ENCODE measurements at regions of chr5 and their contacts with region 1.

Region 1: DNA sequence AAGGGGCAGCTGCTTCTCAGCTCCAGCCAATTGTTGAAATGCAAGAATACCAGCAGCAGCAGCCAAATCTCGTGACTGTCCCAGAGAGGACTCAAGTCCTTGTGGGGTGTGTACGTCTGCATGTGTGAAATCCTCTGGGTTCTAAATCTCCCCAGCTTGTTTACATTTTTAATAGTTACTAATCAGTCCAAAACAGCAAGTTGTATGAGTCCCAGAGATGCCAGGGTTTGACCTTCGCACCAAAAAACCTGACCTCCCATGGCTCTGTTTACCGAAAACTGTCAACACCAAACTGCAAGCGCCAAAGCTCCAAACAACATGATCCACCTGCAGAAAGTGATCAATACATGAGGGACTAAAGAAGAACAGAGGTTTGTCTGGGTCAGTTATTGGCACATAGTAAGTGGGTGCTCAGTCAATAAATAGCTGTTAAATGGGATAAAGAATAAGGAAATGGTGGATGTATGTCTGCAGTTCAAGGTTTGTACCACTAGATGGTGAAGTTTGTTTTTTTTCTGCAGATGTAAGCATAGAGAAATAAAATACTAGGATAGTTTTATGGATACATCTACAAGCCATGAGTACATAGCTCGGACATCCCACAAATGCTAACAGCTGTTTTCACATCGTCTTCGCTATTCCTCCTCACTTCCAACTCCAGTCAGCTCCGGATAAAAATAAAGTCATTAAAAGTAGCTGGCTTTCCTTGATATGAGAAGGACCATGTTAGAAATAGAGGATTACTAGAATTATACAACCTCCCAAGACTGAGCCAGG is 85.3 kb upstream of the ADRB2 start:
- DNase-seq: peak; percentile 61
- H3K4me3 ChIP-seq: no peak overlapping the region
- CTCF ChIP-seq: peak; percentile 42

Region 2: GRCh38 chr5:148191010-148191409 is 550.1 kb before region 1 on chr5:
- CTCF ChIA-PET with region 1: no interaction called
- POLR2A ChIA-PET with region 1: no interaction called
- DNase-seq: no peak
- H3K4me3 ChIP-seq: no peak overlapping the region
- CTCF ChIP-seq: no peak

Region 3: GRCh38 chr5:148685520-148686134 is 55.5 kb before region 1 on chr5:
- CTCF ChIA-PET with region 1: no interaction called
- POLR2A ChIA-PET with region 1: no interaction called
- DNase-seq: no peak
- H3K4me3 ChIP-seq: no peak overlapping the region
- CTCF ChIP-seq: no peak

Region 4: GRCh38 chr5:148760945-148761638 is 19.9 kb after region 1 on chr5:
- CTCF ChIA-PET with region 1: interaction called, 12 read pairs
- POLR2A ChIA-PET with region 1: no interaction called
- DNase-seq: no peak
- H3K4me3 ChIP-seq: no peak overlapping the region
- CTCF ChIP-seq: no peak

Region 5: GRCh38 chr5:148776780-148777179 is 35.6 kb after region 1 on chr5:
- CTCF ChIA-PET with region 1: interaction called, 10 read pairs
- POLR2A ChIA-PET with region 1: no interaction called
- DNase-seq: peak; percentile 34
- H3K4me3 ChIP-seq: no peak overlapping the region
- CTCF ChIP-seq: no peak

Region 6: DNA sequence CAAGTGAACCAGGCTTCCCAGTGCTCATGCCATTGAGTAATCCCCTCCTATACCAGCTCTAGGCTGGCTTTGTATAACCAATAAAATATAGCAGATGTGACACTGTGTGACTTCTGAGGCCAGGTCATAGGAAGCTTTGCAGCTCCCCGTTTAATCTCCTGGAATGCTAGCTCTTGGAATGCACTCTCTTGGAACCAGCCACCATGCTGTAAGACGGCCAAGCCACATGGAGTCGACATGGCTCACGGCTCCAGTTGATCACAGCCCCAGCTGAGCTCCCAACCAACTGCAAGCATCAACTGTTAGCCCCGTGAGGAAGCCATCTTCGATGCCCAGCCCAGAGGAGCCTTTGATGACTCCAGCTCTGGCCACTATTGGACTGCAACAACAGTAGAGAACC is 247.2 kb after region 1 on chr5:
- CTCF ChIA-PET with region 1: interaction called, 24 read pairs
- POLR2A ChIA-PET with region 1: no interaction called
- DNase-seq: no peak
- H3K4me3 ChIP-seq: no peak overlapping the region
- CTCF ChIP-seq: no peak

Region 7: GRCh38 chr5:149018909-149019443 is 277.8 kb after region 1 on chr5:
- CTCF ChIA-PET with region 1: interaction called, 911 read pairs
- POLR2A ChIA-PET with region 1: no interaction called
- DNase-seq: peak; percentile 59
- H3K4me3 ChIP-seq: no peak overlapping the region
- CTCF ChIP-seq: no peak

Region 8: GRCh38 chr5:149046196-149046829 is 305.2 kb after region 1 on chr5:
- CTCF ChIA-PET with region 1: interaction called, 911 read pairs
- POLR2A ChIA-PET with region 1: no interaction called
- DNase-seq: no peak
- H3K4me3 ChIP-seq: no peak overlapping the region
- CTCF ChIP-seq: no peak